Head of caudate nucleus (tissue), 42 donors: ENCODE measurements at regions of chr1 and their contacts with region 1.

Region 1: DNA sequence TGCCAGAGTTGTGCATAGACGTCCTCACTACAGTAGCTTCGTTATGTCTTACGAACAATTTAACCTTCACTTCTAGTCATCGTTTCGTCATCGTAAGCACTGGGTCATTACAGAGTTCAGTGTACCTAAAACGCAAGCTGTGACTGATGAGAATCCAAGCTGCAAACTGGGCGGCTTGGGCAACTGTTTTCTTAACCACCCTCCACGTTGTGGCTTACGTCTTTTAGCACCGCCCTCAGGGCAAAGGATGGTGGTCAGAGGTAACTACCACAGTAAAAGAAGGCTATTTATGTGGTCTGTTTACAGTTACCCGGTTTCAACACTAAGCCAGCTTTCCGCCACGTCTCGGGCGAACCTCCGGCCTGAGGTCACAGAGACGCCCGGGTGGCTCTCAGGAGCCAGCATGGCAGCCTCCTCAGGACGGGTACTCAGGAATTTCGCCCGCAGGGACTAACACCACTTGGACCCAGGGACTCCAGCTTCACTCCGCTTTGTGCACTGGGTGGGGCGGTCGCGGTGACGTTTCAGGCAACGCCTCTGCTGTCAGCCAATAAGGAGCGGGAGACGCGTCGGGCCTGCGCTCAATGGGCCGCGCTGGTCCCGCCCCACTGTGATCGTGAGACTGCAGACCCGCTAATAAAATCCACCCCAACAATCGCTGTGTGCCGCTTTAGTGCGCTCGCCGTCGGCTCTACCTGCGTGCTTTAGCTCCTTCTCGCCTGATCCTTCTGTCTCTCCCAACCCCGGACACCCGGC is at the start of gene CTH:
- DNase-seq: peak; percentile 92 to 99 (median 98)

Region 2: DNA sequence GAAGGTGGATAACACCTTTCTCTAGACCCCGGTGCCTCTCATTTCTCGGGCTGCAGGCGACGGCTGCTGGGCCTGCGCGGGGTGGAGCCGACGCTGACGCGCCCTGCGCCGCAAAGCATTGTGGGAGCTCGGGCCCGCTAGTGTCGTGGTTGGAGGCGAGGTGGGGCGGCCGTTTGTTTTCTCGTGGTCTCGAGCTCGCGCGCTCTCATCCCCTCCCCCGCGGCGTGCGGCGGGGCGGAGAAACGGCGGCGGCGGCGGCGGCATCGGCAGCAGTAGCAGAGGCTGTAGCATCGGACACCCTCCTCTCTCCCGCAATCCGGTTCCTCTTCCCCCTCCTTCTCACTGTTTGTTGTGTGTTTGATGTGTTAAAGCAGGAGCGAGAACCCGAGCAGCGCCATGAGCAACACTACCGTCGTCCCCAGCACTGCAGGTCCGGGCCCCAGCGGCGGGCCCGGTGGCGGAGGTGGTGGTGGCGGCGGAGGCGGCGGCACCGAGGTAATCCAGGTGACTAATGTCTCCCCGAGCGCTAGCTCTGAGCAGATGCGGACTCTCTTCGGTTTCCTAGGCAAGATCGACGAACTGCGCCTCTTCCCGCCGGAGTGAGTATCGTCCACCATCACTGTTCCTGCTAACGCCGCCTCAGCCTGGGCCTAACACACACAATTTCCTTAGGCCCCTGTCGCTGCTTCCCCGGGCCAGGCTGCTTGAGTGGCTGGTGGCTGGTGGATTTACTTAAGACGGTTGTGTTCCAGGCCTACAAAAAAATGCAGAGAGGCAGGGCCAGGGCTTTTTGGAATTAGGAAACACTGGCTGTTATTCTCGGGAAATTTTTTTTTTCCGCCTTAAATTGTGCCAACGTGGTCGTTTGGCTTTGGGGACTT is 189.3 kb before region 1 on chr1 and contains the start of gene SRSF11:
- intact Hi-C with region 1: loop called (anchors 10 kb)
- DNase-seq: peak; percentile 89 to 99 (median 97)

Region 3: GRCh38 chr1:70354332-70355110 is 56.3 kb before region 1 on chr1 and contains the start of gene ANKRD13C:
- intact Hi-C with region 1: loop called (anchors 10 kb)
- DNase-seq: peak; percentile 83 to 98 (median 94)

Region 4: GRCh38 chr1:70760154-70760553 is 349.4 kb after region 1 on chr1:
- intact Hi-C with region 1: no loop called
- DNase-seq: no peak